ENCODE measurements at regions of chr4 and their contacts with region 1.

Region 1: DNA sequence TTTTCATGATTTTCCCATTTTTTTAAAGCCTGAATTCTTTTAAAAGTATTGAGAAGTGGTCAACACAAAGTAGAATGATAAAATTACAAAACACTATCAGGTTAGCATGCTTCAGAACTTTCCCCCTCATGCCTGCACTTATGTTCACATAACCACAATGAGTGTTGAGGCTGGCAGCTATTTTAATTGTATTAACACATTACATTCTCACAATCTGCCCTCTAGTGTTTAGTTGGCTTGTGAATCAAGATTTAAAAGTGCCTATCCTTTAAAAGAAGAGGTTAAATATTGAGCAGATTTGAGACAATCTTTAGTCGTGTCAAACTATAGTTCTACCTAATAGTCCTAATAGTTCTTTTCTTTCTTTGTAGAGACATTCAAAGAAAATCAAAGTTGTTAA is 93.6 kb upstream of the NAP1L5 start:
- DNase-seq: peak; percentile 37
- H3K4me3 ChIP-seq: no peak overlapping the region
- H3K27ac ChIP-seq: no peak overlapping the region
- H3K4me1 ChIP-seq: no peaks in the 10 kb centered on the region
- H3K27me3 ChIP-seq: no peaks in the 10 kb centered on the region
- CTCF ChIP-seq: peak; percentile 52

Region 2: GRCh38 chr4:86870442-86871069 is 1920.7 kb before region 1 on chr4:
- CTCF ChIA-PET with region 1: no interaction called
- POLR2A ChIA-PET with region 1: no interaction called
- intact Hi-C with region 1: no loop called
- DNase-seq: no peak
- H3K4me3 ChIP-seq: no peak overlapping the region
- H3K27ac ChIP-seq: no peak overlapping the region
- H3K4me1 ChIP-seq: no peaks in the 10 kb centered on the region
- H3K27me3 ChIP-seq: no peaks in the 10 kb centered on the region
- CTCF ChIP-seq: no peak

Region 3: GRCh38 chr4:88690355-88690754 is 100.9 kb before region 1 on chr4:
- CTCF ChIA-PET with region 1: no interaction called
- POLR2A ChIA-PET with region 1: no interaction called
- intact Hi-C with region 1: no loop called
- DNase-seq: peak; percentile 3
- H3K4me3 ChIP-seq: no peak overlapping the region
- H3K27ac ChIP-seq: no peak overlapping the region
- H3K4me1 ChIP-seq: no peaks in the 10 kb centered on the region
- H3K27me3 ChIP-seq: no peaks in the 10 kb centered on the region
- CTCF ChIP-seq: no peak

Region 4: DNA sequence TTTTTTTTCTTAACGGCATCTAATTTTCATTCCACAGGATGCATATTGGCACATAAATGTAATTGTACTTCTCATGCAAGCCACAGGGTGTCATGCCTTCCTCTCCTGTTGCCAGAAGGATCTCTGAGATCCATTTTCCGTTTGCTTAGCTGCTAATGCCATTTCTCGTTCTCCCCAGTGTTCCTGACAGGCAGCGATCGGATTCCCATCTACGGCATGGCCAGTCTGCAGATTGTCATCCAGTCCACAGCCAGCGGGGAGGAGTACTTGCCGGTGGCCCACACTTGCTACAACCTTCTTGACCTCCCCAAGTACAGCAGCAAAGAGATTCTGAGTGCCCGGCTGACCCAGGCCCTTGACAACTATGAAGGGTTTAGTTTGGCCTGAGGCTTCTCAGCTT is 84.7 kb before region 1 on chr4:
- CTCF ChIA-PET with region 1: interaction called, 7 read pairs
- POLR2A ChIA-PET with region 1: no interaction called
- intact Hi-C with region 1: loop called (anchors 2 kb)
- DNase-seq: peak; percentile 69
- H3K4me3 ChIP-seq: no peak overlapping the region
- H3K27ac ChIP-seq: no peak overlapping the region
- H3K4me1 ChIP-seq: peaks cover 3% of the 10 kb centered on the region
- H3K27me3 ChIP-seq: no peaks in the 10 kb centered on the region
- CTCF ChIP-seq: peak; percentile 59